ENCODE measurements at regions of chr6 and their contacts with region 1.

Region 1: GRCh38 chr6:46749731-46750130 is 3.0 kb downstream of the ANKRD66 start:
- DNase-seq: no peak
- H3K4me3 ChIP-seq: no peak overlapping the region
- H3K27ac ChIP-seq: no peak overlapping the region
- H3K4me1 ChIP-seq: no peaks in the 10 kb centered on the region
- CTCF ChIP-seq: no peak

Region 2: DNA sequence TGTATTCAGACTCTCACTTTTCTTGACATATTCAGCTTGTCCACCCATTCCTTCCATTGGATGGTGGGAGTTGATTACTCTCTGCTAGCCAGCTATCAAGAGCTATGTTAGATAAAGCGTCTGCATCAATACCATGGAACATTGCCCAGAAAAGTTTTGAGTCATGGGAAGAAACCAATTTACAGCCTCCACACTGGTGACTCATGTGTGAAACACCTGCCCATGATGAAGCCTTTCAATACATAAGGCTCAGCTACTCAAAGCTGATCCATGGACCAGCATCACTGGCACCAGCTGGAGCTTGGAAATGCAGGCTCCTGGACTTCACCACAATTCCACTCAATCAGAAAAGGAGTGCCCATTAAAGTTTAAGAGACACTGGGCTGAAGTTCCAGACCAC is 30.6 kb before region 1 on chr6:
- CTCF ChIA-PET with region 1: no interaction called
- POLR2A ChIA-PET with region 1: interaction called, 10 read pairs
- intact Hi-C with region 1: no loop called
- DNase-seq: no peak
- H3K4me3 ChIP-seq: no peak overlapping the region
- H3K27ac ChIP-seq: no peak overlapping the region
- H3K4me1 ChIP-seq: no peaks in the 10 kb centered on the region
- CTCF ChIP-seq: no peak